ENCODE measurements at regions of chr6 and their contacts with region 1.

Region 1: DNA sequence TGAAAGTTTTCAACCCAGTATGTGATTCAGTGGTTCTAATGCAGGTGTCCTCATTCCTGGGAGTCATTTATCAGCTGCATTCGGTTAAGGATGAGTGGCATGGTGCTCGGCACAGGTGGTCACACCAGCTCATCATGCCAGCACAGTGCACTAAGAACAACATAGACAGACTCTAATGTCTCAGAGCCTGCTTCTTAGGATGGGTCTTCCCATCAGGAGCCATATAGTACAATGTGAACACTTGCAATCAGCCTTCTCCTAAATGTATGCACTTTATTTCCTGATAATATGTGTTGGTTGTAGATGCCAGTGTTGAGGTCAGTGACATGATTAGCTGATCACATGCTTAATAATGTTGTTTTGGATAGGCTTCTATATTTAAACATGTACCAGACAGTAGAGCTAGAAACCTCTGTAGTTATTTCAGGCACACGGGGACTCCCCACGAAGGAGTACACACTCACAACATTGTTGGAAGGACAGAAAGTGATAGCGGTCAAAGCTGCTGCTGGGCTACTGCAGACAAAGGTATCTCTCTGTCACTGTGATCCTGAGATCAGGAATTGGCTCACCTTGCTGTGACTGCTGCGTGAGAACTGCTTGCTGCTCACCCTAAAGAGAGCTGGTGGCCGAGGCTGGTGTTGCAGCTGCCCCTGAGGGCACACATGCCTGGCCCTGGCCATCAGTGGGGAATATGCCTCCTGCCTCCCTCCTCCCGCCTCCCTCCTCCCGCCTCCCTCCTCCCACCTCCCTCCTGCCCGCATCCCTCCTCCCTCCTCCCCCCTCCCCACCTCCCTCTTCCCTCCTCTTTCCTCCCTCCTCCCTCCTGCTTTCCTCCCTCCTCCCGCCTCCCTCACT is 195.4 kb downstream of the SMOC2 start:
- DNase-seq: no peak
- H3K4me3 ChIP-seq: no peak overlapping the region
- H3K27ac ChIP-seq: no peak overlapping the region
- H3K4me1 ChIP-seq: peaks cover 0 to 9% (median 2%) of the 10 kb centered on the region in 4 donors
- H3K27me3 ChIP-seq: no peaks in the 10 kb centered on the region
- CTCF ChIP-seq: no peak
- EP300 ChIP-seq: no peak
- POLR2A ChIP-seq: no peak

Region 2: DNA sequence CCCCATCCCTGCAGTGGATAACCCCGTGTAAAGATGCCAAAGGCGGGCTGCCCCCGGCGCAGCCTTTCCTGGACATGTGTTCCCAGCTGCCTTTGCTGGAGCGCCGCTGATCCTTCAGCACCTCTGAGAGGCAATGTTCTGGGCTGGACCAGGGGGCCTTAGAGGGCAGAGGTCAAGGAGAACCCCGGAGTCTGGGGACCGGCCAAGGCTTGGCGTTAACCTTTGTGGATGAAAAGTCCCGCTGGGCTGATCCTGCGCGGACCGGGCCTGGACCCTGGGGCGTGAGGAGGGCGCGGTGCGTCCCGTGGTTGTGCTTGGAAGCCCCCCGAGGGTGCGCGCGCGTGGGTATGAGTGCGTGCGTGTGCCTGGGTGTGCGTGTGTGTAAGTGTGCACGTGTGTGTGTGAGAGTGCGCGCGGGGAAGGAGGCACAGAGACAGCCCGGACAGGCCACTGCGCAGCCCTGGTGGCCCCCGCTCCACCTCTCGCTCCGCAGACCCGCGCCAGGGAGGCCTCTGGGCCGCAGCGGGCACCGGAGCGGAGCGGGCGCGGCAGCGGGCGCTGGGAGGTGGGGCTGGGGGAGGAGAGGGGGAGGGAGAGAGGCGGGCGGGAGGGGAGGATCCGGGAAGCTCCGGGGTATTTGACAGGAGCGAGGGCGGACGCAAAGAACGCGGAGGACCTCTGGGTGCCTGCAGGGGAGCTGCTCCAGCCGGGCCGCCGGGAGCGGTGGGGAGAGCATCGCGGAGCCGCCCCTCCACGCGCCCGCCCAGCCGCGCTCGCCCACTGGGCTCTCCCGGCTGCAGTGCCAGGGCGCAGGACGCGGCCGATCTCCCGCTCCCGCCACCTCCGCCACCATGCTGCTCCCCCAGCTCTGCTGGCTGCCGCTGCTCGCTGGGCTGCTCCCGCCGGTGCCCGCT is 195.6 kb before region 1 on chr6 and contains the start of gene SMOC2:
- in situ Hi-C with region 1: no loop called
- intact Hi-C with region 1: no loop called
- DNase-seq: peak; percentile 52
- H3K4me3 ChIP-seq: peak within 1 kb of the TSS; percentile 46 to 59 (median 56)
- H3K27ac ChIP-seq: peak within 1 kb of the TSS; percentile 23 to 69 (median 58)
- H3K4me1 ChIP-seq: peaks cover 0 to 24% (median 21%) of the 10 kb centered on the region in 4 donors
- H3K27me3 ChIP-seq: peaks cover 54% of the 10 kb centered on the region
- CTCF ChIP-seq: no peak
- EP300 ChIP-seq: no peak
- POLR2A ChIP-seq: no peak
- total RNA-seq, gene SMOC2: 5.8 to 14.5 (median 9.0) TPM

Region 3: GRCh38 chr6:168574699-168575195 is 61.6 kb before region 1 on chr6:
- in situ Hi-C with region 1: no loop called
- intact Hi-C with region 1: loop called (anchors 10 kb)
- DNase-seq: peak; percentile 64
- H3K4me3 ChIP-seq: no peak overlapping the region
- H3K27ac ChIP-seq: peak overlapping the region in 3 of 4 donors; percentile 52 to 76 (median 58)
- H3K4me1 ChIP-seq: peaks cover 0 to 5% (median 2%) of the 10 kb centered on the region in 4 donors
- H3K27me3 ChIP-seq: no peaks in the 10 kb centered on the region
- CTCF ChIP-seq: no peak
- EP300 ChIP-seq: no peak
- POLR2A ChIP-seq: no peak

Region 4: DNA sequence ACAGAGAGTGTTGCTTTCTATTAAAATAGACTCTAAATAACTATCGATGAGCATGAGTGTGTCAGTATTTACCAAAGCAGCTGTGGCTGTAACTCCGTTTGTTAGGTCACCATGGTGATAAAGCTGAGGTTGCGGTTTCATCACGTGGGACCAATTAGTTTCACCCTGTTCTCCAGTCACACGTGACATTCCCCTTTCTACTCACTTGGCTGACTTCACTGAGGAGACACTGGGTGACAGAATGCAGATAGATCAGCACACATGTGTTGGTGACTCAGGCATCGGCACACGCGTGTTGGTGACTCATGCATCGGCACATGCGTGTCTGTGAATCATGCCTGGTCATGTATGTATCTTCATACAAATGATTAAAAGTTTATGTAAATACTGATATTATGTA is 331.9 kb after region 1 on chr6:
- in situ Hi-C with region 1: no loop called
- intact Hi-C with region 1: no loop called
- DNase-seq: peak; percentile 57
- H3K4me3 ChIP-seq: no peak overlapping the region
- H3K27ac ChIP-seq: peak overlapping the region in 2 of 4 donors; percentile 0 to 29
- H3K4me1 ChIP-seq: no peaks in the 10 kb centered on the region
- H3K27me3 ChIP-seq: no peaks in the 10 kb centered on the region
- CTCF ChIP-seq: no peak
- EP300 ChIP-seq: peak; percentile 46
- POLR2A ChIP-seq: no peak